Left ventricle myocardium inferior (tissue), 1 donor: ENCODE measurements at regions of chr16 and their contacts with region 1.

Region 1: GRCh38 chr16:86563489-86564345 is 2.9 kb upstream of the FOXC2 start:
- DNase-seq: peak; percentile 86
- H3K4me3 ChIP-seq: peak overlapping the region; percentile 42
- H3K27ac ChIP-seq: peak overlapping the region; percentile 57
- H3K4me1 ChIP-seq: peaks cover 21% of the 10 kb centered on the region
- H3K27me3 ChIP-seq: peaks cover 98% of the 10 kb centered on the region
- CTCF ChIP-seq: peak; percentile 100

Region 2: DNA sequence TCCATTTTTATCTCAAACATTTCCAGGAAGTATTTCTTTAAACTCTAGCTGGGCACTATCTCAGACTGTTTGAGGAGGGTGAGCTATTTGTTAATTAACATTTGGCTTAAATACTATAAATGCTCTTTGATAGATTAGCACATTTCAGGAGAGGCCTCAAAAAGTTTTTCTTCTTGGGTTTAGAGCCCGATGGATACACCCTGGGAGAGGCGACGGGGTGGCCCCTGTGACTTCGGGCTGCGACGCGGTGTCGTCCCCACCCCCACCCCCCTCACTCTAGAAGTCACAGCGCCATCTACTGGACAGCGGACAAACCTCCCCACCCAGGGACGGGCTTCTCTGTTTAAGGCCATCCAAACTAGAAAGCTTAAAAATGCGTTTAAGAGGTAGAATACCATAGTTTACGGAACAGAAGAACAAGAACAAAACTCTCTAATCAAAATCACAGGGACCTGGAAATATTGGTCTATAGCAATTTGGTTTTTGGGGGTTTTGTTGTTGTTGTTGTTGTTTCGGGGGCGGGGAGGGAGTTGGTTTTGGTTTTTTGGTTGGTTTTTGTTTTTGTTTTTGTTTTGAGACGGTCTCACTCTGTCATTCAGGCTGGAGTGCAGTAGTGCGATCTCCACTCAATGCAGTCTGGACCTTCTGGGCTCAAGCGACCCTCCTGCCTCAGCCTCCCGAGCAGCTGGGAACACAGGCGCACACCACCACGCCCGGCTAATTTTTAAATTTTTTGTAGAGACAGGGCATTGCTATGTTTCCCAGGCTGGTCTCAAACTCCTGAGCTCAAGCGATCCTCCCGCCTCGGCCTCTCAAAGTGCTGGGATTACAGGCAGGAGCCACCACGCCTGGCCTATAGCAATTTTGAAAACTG is 499.1 kb after region 1 on chr16:
- intact Hi-C with region 1: loop called (anchors 5 kb)
- DNase-seq: peak; percentile 74
- H3K4me3 ChIP-seq: peak overlapping the region; percentile 44
- H3K27ac ChIP-seq: no peak overlapping the region
- H3K4me1 ChIP-seq: peaks cover 7% of the 10 kb centered on the region
- H3K27me3 ChIP-seq: peaks cover 52% of the 10 kb centered on the region
- CTCF ChIP-seq: peak; percentile 79

Region 3: DNA sequence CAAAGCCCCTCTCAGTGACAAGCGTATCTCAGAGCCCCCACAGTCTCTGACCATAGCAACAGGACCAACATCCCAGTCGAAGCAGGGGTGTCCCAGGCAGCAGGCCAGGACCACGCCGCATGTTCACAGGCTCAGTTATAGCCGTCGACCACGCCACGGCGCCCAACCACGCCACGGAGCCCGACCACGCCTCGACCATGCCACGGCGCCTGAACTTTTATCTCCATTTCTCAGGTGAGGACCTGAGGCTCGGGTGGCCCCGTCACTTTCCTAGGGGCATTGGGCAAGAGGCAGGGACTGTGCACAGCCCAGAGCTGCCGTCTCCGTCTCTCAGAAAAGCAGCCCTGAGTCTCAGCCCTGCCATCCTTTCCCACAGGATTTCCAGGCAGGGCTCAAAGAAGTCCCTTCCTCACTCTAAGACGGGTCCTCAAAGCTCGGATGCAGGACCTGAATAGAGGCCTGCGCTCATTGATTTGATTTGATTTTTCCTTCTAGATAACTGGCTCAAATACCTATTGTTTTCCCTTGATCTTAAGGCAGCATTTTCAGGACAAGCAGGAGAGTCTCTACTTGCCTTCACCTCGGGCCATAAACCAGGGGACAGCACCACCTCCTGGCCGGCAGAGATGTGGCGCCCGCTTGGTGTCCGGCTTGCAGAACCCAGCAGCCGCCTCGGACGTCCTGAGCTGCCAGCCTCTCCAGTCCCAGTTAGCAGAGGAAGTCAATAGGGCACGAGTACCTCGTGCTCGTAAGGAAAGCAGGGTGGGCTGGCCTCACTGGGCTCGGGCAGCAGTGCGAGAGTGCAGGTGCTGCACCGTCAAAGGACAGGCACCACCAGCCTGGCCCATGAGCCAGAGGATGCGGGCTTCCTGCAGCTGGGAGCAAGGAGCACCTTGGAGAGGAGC is 714.7 kb after region 1 on chr16:
- intact Hi-C with region 1: loop called (anchors 5 kb)
- DNase-seq: peak; percentile 78
- H3K4me3 ChIP-seq: no peak overlapping the region
- H3K27ac ChIP-seq: no peak overlapping the region
- H3K4me1 ChIP-seq: peaks cover 4% of the 10 kb centered on the region
- H3K27me3 ChIP-seq: peaks cover 56% of the 10 kb centered on the region
- CTCF ChIP-seq: peak; percentile 91